PC-3 (cell line): ENCODE measurements at regions of chrX and their contacts with region 1.

Region 1: DNA sequence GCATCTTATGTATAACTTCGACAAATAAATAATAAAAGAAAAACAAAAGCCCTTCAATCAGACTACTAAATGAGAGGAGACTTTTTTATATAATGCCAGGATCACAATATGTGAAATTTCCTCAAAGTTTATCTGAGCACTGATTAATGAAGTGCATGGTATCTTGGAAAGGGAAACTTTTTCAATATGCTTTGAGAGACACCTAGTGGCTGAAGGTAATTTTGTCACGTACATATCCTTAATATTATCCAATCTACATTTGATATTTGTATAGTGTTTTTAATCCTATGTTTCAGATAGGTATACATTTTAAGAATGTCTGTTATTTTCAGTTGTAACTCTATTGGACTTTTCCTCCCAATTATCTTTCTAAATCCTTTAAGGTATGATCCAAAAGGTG is 146.8 kb downstream of the KLHL4 start:
- DNase-seq: peak; percentile 57
- ATAC-seq: peak; percentile 65
- H3K4me3 ChIP-seq: no peak overlapping the region
- H3K27ac ChIP-seq: no peak overlapping the region
- H3K4me1 ChIP-seq: no peaks in the 10 kb centered on the region
- H3K27me3 ChIP-seq: no peaks in the 10 kb centered on the region
- CTCF ChIP-seq: peak; percentile 66

Region 2: GRCh38 chrX:87338510-87338909 is 325.9 kb before region 1 on chrX:
- CTCF ChIA-PET with region 1: no interaction called
- POLR2A ChIA-PET with region 1: no interaction called
- intact Hi-C with region 1: loop called (anchors 1 kb)
- DNase-seq: peak; percentile 47
- ATAC-seq: peak; percentile 33; the same call in 1 of the 2 replicates
- H3K4me3 ChIP-seq: no peak overlapping the region
- H3K27ac ChIP-seq: no peak overlapping the region
- H3K4me1 ChIP-seq: no peaks in the 10 kb centered on the region
- H3K27me3 ChIP-seq: no peaks in the 10 kb centered on the region
- CTCF ChIP-seq: peak; percentile 53; the same call in 1 of the 2 replicates

Region 3: GRCh38 chrX:87492598-87492997 is 171.8 kb before region 1 on chrX:
- CTCF ChIA-PET with region 1: no interaction called
- POLR2A ChIA-PET with region 1: no interaction called
- intact Hi-C with region 1: loop called (anchors 5 kb)
- DNase-seq: no peak
- ATAC-seq: no peak
- H3K4me3 ChIP-seq: no peak overlapping the region
- H3K27ac ChIP-seq: no peak overlapping the region
- H3K4me1 ChIP-seq: peaks cover 4% of the 10 kb centered on the region; the same call in 1 of the 2 replicates
- H3K27me3 ChIP-seq: no peaks in the 10 kb centered on the region
- CTCF ChIP-seq: no peak